ENCODE measurements at regions of chr9 and their contacts with region 1.

Region 1: GRCh38 chr9:19568946-19569345 is 160.1 kb downstream of the ACER2 start:
- DNase-seq: no peak
- ATAC-seq: no peak
- H3K4me3 Mint-ChIP-seq: no peak overlapping the region
- H3K27ac Mint-ChIP-seq: no peak overlapping the region
- H3K4me1 Mint-ChIP-seq: no peaks in the 10 kb centered on the region
- H3K27me3 Mint-ChIP-seq: peaks cover 3% of the 10 kb centered on the region

Region 2: DNA sequence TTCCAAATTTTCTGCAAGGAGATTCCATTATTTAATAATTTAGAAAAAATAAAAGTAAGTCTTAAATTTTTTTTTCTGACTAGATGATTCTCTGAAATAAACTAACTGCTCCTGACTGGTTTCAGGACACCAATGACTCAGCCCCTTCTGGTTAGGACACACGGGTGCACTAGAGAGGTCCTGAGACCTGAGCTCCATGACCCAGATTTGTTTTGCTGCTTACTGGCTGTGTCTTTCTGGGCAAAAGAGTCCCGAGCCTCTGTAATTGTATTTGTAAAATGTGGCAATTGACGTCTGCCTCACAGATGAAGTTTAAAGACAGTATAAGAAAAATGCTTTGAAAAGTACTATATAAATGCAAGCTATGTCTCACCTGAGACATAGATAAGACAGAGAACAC is 130.8 kb after region 1 on chr9:
- CTCF ChIA-PET with region 1: no interaction called
- POLR2A ChIA-PET with region 1: no interaction called
- intact Hi-C with region 1: loop called in 1 of 2 experiments (anchors 5 kb)
- DNase-seq: no peak
- ATAC-seq: no peak
- H3K4me3 Mint-ChIP-seq: no peak overlapping the region
- H3K27ac Mint-ChIP-seq: no peak overlapping the region
- H3K4me1 Mint-ChIP-seq: no peaks in the 10 kb centered on the region
- H3K27me3 Mint-ChIP-seq: peaks cover 6% of the 10 kb centered on the region

Measured in activated CD4-positive, alpha-beta T cell treated with anti-CD3 and anti-CD28 coated beads for 36 hours (primary cell).